Right ventricle myocardium inferior (tissue), 1 donor: ENCODE measurements at regions of chr10 and their contacts with region 1.

Region 1: GRCh38 chr10:83469718-83470331 is 669.5 kb upstream of the GHITM start:
- DNase-seq: no peak
- ATAC-seq: no peak

Region 2: DNA sequence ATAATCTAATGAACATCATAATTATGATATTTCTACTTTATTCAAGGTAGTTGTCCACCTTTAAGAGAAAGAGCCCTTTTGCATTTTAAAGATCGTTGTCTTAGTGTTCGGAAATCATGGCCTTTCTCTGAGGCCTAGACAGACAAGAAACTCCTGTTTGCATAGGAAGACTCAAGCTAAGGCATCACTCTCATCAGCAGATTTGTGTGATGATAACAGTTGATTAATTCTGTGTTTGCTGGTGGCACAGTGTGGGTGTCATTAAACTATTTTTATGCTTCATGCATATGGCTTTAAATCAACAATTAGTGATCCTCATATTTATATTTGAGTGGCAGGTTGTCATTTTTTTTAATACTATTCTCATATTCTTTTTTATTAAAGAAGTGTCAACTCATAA is 37.8 kb after region 1 on chr10:
- intact Hi-C with region 1: loop called (anchors 2 kb)
- DNase-seq: no peak
- ATAC-seq: no peak